Astrocyte of the cerebellum (primary cell): ENCODE measurements at regions of chr4 and their contacts with region 1.

Region 1: DNA sequence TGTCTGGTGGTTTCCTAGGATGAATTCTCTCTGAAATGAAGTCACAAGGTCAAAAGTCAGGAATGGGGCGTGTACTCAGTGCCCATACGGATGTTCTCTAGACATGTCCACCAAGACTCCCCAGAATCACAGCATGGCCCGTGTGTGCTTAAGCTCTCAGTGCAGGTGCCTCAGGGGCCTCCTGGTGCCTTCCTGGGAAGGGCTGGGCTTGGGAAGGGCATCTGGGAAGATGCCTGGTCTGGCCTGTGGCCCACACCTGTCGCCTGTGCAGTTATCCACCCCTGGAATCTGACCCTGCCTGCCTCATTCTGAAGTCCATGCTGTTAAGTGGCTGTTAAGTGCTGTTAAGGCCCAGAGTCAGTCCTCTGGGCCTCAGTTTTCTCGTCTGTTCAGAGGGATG is 31.2 kb downstream of the SORCS2 start:
- DNase-seq: no peak
- H3K4me3 ChIP-seq: no peak overlapping the region
- CTCF ChIP-seq: no peak

Region 2: DNA sequence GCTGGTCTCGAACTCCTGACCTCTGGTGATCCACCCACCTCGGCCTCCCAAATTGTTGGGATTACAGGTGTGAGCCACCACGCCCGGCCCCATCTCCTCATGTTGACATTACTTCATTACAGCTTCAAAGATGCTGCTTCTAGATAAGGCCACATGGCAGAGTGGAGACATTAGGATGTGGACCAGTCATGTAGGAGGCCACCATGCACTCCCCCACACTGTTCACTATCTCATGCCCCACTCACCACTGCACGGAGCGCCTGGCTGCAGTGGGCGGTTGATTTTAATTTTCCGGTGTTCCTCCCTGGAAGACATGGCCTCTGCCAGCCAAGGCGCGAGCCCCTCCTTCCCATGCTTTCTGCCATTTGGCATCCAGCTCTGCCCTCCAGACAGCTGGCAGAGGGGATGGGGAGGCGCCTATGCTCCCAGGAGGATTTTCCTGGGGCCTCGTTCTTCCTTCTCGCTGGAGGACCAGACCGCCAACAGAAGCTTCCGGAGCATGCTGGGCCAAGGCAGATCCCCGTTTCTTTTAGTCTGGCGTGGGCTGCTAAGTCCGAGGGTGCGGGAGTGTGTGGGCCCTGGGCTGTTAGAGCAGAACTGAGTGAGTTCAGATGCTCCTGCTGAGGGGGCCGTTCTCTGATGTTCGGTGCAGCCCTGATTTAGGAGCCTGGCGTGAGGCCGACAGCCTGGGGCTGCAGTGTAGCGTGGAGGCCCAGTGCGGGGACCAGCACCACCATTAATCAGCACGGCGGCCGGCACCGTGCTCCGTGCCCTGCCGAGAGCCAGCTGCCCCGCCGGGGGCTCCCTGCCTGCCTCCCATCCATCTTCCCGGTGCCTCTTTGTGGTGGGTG is 61.9 kb after region 1 on chr4:
- in situ Hi-C with region 1: loop called (anchors 5 kb)
- DNase-seq: no peak
- H3K4me3 ChIP-seq: no peak overlapping the region
- CTCF ChIP-seq: no peak

Region 3: GRCh38 chr4:7328898-7329638 is 105.5 kb after region 1 on chr4:
- in situ Hi-C with region 1: loop called (anchors 5 kb)
- DNase-seq: peak; percentile 45
- H3K4me3 ChIP-seq: no peak overlapping the region
- CTCF ChIP-seq: no peak